ENCODE measurements at regions of chr4 and their contacts with region 1.

Region 1: DNA sequence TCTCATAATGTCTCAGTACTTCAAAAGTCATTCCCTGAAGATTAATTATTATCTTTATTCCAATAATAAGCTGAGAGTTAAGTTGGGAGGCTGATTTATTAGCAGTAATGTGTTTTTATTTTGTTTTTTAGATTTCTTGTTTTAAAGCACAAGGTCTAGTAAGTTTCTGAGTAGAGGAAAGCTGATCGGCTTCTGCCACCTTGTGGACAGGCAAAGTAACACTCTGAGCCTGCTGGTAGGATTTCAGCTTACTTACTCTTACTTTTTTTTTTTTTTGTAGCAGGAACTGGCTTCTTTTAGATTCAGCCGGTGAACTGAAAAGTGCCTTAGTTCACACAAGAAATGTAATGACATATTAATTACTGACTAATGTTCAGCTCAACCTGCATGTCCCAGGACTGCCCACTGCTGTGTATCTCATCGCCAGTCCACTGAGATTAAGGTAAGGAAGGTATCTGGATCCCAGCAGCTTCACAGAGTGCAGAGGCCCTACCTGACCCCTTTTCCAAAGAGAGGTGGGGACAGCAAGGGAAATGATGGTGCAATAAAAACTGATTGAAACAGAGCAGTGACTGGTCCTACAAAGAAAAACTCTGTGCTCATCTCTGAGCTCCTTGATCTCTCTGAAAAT is 126.5 kb downstream of the ADGRA3 start:
- DNase-seq: peak; percentile 53
- H3K4me3 ChIP-seq: no peak overlapping the region
- H3K27ac ChIP-seq: no peak overlapping the region
- H3K4me1 ChIP-seq: peaks cover 20% of the 10 kb centered on the region
- H3K27me3 ChIP-seq: no peaks in the 10 kb centered on the region
- CTCF ChIP-seq: peak; percentile 84 to 93

Region 2: GRCh38 chr4:21780158-21780557 is 609.2 kb before region 1 on chr4:
- CTCF ChIA-PET with region 1: no interaction called
- dilution Hi-C with region 1: no loop called
- in situ Hi-C with region 1: loop called (anchors 10 kb)
- intact Hi-C with region 1: no loop called
- DNase-seq: peak; percentile 40
- H3K4me3 ChIP-seq: no peak overlapping the region
- H3K27ac ChIP-seq: no peak overlapping the region
- H3K4me1 ChIP-seq: no peaks in the 10 kb centered on the region
- H3K27me3 ChIP-seq: no peaks in the 10 kb centered on the region
- CTCF ChIP-seq: no peak

Region 3: DNA sequence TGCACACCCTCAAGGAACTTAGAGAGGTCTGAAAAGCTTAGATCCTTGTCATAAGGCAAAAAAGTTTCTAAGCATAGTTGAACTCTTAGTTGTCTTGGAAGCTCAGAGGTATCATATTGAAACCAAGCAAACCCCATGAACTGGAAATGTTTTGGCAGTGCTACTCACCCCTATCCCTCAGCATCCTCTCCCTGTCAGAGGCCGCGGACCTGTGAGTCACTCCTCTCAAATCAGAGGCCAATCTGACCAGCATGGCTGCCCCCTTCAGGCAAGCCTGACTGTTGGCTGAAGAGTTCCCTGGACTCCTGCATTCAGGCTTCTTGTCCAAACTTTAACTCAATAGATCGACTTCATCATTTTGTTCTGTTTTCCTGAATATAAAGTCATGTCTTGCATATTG is 510.2 kb before region 1 on chr4:
- CTCF ChIA-PET with region 1: no interaction called
- dilution Hi-C with region 1: no loop called
- in situ Hi-C with region 1: no loop called
- intact Hi-C with region 1: loop called (anchors 10 kb)
- DNase-seq: no peak
- H3K4me3 ChIP-seq: no peak overlapping the region
- H3K27ac ChIP-seq: no peak overlapping the region
- H3K4me1 ChIP-seq: peaks cover 12% of the 10 kb centered on the region
- H3K27me3 ChIP-seq: no peaks in the 10 kb centered on the region
- CTCF ChIP-seq: peak in 1 of 2 donors; percentile 2

Region 4: DNA sequence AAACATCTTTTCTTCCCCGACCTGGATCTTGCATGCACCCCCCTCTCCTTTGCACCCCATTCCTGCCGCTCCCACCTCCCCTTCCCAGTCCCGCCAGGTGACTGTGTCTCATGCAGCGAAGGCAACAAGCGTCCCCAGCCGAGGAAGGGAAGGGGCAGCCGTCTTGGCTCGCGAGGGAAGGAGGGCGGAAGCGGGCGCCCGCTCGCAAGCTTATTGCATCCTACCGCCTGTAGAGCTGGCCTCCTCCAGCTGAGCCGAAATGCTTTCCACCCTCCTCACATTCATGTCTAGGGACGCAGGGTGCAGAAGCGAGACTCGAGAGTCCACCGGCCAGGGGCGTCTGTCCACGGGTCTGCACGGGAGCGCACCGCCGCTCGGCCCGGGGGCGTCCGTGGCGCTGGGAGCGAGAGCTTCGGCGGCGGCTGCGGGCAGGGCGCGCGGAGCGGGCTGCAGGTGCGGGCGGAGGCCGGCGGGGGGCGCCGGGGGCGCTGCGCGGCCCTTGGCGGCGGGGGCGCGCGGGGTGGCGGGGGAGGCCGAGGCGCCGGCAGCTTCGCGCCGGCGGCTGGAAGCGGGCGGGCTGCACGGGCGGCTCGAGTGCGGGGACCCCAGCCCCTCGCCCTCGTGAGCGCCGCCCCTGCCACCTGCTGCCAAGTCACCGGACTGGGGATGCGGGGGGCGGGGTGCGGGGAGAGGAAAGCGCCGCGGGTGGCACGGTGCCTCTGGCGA is 440.8 kb before region 1 on chr4 and contains the start of gene KCNIP4:
- CTCF ChIA-PET with region 1: no interaction called
- dilution Hi-C with region 1: no loop called
- in situ Hi-C with region 1: no loop called
- intact Hi-C with region 1: loop called (anchors 10 kb)
- DNase-seq: peak; percentile 34
- H3K4me3 ChIP-seq: peak within 1 kb of the TSS; percentile 44 to 59 (median 55)
- H3K27ac ChIP-seq: no peak within 1 kb of the TSS
- H3K4me1 ChIP-seq: peaks cover 6% of the 10 kb centered on the region
- H3K27me3 ChIP-seq: peaks cover 15% of the 10 kb centered on the region
- CTCF ChIP-seq: no peak
- total RNA-seq, gene KCNIP4: not detected

Region 5: GRCh38 chr4:22129454-22130029 is 259.8 kb before region 1 on chr4:
- CTCF ChIA-PET with region 1: interaction called, 3 read pairs
- dilution Hi-C with region 1: no loop called
- in situ Hi-C with region 1: loop called (anchors 10 kb)
- intact Hi-C with region 1: loop called (anchors 1 kb)
- DNase-seq: peak; percentile 41
- H3K4me3 ChIP-seq: no peak overlapping the region
- H3K27ac ChIP-seq: no peak overlapping the region
- H3K4me1 ChIP-seq: no peaks in the 10 kb centered on the region
- H3K27me3 ChIP-seq: no peaks in the 10 kb centered on the region
- CTCF ChIP-seq: peak; percentile 80 to 82

Region 6: GRCh38 chr4:22237155-22237751 is 152.1 kb before region 1 on chr4:
- CTCF ChIA-PET with region 1: interaction called, 4 read pairs
- dilution Hi-C with region 1: no loop called
- in situ Hi-C with region 1: no loop called
- intact Hi-C with region 1: loop called (anchors 10 kb)
- DNase-seq: no peak
- H3K4me3 ChIP-seq: no peak overlapping the region
- H3K27ac ChIP-seq: no peak overlapping the region
- H3K4me1 ChIP-seq: no peaks in the 10 kb centered on the region
- H3K27me3 ChIP-seq: peaks cover 3% of the 10 kb centered on the region
- CTCF ChIP-seq: peak; percentile 60 to 67

Region 7: GRCh38 chr4:22515145-22515887 is 126.0 kb after region 1 on chr4:
- CTCF ChIA-PET with region 1: no interaction called
- dilution Hi-C with region 1: no loop called
- in situ Hi-C with region 1: no loop called
- intact Hi-C with region 1: no loop called
- DNase-seq: peak; percentile 74
- H3K4me3 ChIP-seq: peak overlapping the region; percentile 69 to 70 (median 70)
- H3K27ac ChIP-seq: peak overlapping the region; percentile 87
- H3K4me1 ChIP-seq: peaks cover 15% of the 10 kb centered on the region
- H3K27me3 ChIP-seq: no peaks in the 10 kb centered on the region
- CTCF ChIP-seq: no peak